ENCODE measurements at regions of chr17 and their contacts with region 1.

Region 1: GRCh38 chr17:74961657-74962490 is 10.7 kb downstream of the HID1 start:
- DNase-seq: peak; percentile 91 to 96
- ATAC-seq: peak; percentile 58 to 80
- H3K4me3 ChIP-seq: no peak overlapping the region
- H3K27ac ChIP-seq: 0 out of 6 replicates have a peak overlapping the region, but pooled peaks of 1 of the 2 experiments have one; percentile 9
- H3K4me1 ChIP-seq: peaks cover 12% of the 10 kb centered on the region
- CTCF ChIP-seq: peak; percentile 95
- EP300 ChIP-seq: no peak
- POLR2A ChIP-seq: no peak
- RAD21 ChIP-seq: peak; percentile 97 to 98

Region 2: DNA sequence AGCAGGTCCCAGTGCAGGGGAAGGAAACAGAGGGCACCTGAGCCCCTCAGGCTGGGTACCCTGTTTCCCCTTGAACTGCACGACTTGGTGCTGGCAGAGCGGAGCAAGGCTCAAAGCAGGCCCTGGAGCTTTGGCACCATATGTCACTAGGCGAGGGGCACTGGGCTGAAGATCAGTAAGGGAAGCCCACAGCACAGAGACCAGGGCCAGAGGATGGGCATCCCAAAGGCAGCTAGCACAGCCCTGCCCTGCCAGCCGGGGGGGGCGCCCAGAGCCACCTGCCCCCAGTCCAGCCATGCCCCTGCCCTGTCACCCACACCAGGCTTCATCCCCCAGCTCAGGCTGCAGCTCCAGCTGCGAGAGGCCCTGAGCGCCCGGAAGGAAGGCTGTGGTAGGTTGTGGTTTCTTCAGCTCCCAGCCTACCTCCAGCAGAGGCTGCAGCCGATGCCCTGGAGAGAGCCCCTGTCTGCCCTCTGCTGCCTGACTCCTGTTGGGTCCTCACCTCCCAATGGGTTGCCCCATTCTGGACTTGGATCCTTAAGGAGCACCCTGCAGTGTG is 202.6 kb before region 1 on chr17:
- CTCF ChIA-PET with region 1: no interaction called
- POLR2A ChIA-PET with region 1: no interaction called
- DNase-seq: no peak
- ATAC-seq: peak; percentile 6 to 38; a peak in 3 of 6 replicates
- H3K4me3 ChIP-seq: no peak overlapping the region
- H3K27ac ChIP-seq: peak overlapping the region; percentile 57 to 79
- H3K4me1 ChIP-seq: peaks cover 69% of the 10 kb centered on the region
- CTCF ChIP-seq: no peak
- EP300 ChIP-seq: no peak
- POLR2A ChIP-seq: no peak
- RAD21 ChIP-seq: no peak

Region 3: GRCh38 chr17:74842599-74843351 is 119.1 kb before region 1 on chr17:
- CTCF ChIA-PET with region 1: interaction called, 18 read pairs
- POLR2A ChIA-PET with region 1: interaction called, 3 read pairs
- DNase-seq: peak; percentile 82 to 96
- ATAC-seq: peak; percentile 79 to 89
- H3K4me3 ChIP-seq: peak overlapping the region; percentile 50
- H3K27ac ChIP-seq: peak overlapping the region; percentile 82 to 89
- H3K4me1 ChIP-seq: peaks cover 4% of the 10 kb centered on the region; the same call in 1 of the 3 replicates
- CTCF ChIP-seq: peak; percentile 63
- EP300 ChIP-seq: no peak
- POLR2A ChIP-seq: peak; percentile 77
- RAD21 ChIP-seq: peak; percentile 41 to 61; a peak in 4 of 5 replicates

Region 4: DNA sequence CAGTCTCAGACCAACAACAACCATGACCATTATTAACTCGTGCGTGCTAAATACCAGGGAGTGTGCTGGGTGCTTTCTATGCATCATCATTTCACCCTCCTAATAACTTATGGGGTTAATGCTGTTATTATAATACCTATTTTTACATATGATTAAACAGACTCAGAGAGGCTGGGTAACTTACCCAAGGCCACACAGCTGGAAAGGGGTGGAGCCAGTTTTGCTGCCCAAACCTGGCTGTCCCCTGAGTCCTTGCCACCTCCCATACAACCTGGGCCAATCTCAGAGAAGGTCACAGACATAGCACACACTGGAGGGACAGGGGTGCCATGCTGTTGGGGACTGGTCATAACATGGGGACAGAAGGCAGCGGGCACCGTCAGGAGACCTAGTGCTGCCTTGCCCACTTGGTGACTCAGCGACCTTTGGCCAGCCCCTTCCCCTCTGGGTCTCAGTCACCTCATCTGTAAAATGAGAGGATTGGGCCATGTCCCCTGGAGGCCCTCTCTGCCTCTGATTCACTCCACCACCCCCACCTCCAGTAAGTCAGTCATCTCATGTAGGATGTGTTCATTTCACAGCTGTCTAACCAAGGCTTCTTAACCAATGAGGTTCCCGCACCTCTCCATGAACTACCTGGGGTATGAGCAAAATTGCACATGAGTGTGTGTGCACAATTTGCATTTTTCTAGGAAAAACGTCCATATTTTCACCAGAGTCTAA is 57.0 kb before region 1 on chr17:
- CTCF ChIA-PET with region 1: interaction called, 11 read pairs
- POLR2A ChIA-PET with region 1: no interaction called
- DNase-seq: no peak
- ATAC-seq: no peak
- H3K4me3 ChIP-seq: no peak overlapping the region
- H3K27ac ChIP-seq: no peak overlapping the region
- H3K4me1 ChIP-seq: no peaks in the 10 kb centered on the region
- CTCF ChIP-seq: no peak
- EP300 ChIP-seq: no peak
- POLR2A ChIP-seq: no peak
- RAD21 ChIP-seq: no peak

Region 5: DNA sequence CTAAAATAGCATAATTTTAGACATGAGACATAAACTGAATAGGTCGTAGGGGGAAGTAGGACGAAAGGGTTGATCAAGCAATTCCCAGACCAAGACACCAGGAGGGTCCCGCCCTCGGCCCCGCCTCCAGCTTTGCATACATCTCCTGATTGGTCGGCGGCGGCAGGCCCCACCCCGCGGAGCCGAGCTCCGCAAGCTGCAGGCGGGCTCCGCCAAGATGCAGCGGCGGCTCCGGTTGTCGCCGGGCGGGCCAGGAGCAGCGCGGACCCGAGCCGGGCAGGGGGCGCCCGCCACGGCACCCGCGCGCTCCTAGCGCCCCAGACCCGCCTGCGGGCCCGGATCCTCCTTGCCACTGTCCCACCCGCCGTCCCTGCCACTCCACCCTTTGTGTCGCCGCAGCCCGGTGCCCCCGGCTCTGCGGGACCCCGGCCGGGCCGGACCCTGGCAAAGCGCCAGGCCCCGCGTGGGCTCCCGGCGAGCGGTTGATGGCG is 25.6 kb after region 1 on chr17 and contains the start of gene CDR2L:
- CTCF ChIA-PET with region 1: interaction called, 181 read pairs
- POLR2A ChIA-PET with region 1: interaction called, 13 read pairs
- DNase-seq: peak; percentile 94
- ATAC-seq: peak; percentile 82 to 87
- H3K4me3 ChIP-seq: peak within 1 kb of the TSS; percentile 80
- H3K27ac ChIP-seq: peak within 1 kb of the TSS; percentile 94 to 95
- H3K4me1 ChIP-seq: peaks cover 53% of the 10 kb centered on the region
- CTCF ChIP-seq: no peak
- EP300 ChIP-seq: no peak
- POLR2A ChIP-seq: peak; percentile 95
- RAD21 ChIP-seq: no peak
- polyA plus RNA-seq, gene CDR2L: 18.0 and 18.5 TPM in 2 replicates

Region 6: DNA sequence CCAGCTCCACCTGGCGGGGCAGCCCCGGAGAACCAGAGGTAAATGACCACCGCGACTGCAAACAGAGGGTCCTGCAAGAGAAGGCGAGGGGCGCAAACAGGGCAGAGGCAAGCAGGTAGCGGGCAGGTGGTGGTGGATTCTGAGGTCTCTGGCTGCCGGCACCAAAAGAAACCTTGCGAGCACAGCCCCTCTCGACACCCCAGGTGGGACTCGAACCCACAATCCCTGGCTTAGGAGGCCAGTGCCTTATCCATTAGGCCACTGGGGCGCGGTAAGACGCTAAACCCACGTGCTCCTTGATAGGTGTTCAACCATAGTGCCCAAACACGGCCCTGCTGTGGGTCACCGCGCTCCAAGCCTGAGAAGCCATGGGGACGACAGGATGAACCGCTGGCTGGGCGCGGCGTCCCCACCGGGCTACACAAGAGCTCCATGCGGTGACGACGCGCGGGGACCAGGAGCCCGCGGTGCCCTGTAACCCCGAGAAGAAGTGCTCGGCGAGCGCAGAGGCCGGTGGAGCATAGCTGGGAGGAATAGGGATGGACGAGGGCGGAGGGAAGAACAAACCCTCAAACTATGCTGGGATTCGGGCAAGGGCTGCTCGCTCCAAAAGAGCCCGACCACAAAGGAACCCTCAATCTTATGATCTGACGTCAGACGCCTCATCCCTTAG is 72.5 kb after region 1 on chr17:
- CTCF ChIA-PET with region 1: interaction called, 60 read pairs
- POLR2A ChIA-PET with region 1: interaction called, 15 read pairs
- DNase-seq: peak; percentile 81 to 97
- ATAC-seq: peak; percentile 57 to 71
- H3K4me3 ChIP-seq: peak overlapping the region; percentile 73
- H3K27ac ChIP-seq: peak overlapping the region; percentile 97
- H3K4me1 ChIP-seq: peaks cover 30% of the 10 kb centered on the region
- CTCF ChIP-seq: no peak
- EP300 ChIP-seq: no peak
- POLR2A ChIP-seq: no peak
- RAD21 ChIP-seq: no peak; a peak in 1 of 5 replicates

Region 7: GRCh38 chr17:75131280-75132017 is 169.6 kb after region 1 on chr17 and contains the start of gene NT5C:
- CTCF ChIA-PET with region 1: interaction called, 23 read pairs
- POLR2A ChIA-PET with region 1: no interaction called
- DNase-seq: peak; percentile 85 to 91
- ATAC-seq: peak; percentile 83 to 86
- H3K4me3 ChIP-seq: peak within 1 kb of the TSS; percentile 89
- H3K27ac ChIP-seq: peak within 1 kb of the TSS; percentile 97
- H3K4me1 ChIP-seq: peaks cover 40% of the 10 kb centered on the region
- CTCF ChIP-seq: peak; percentile 95
- EP300 ChIP-seq: no peak
- POLR2A ChIP-seq: peak; percentile 72
- RAD21 ChIP-seq: peak; percentile 58 to 77
- polyA plus RNA-seq, gene NT5C: 54.5 and 73.7 TPM in 2 replicates

Region 8: GRCh38 chr17:75430159-75430974 is 468.5 kb after region 1 on chr17:
- CTCF ChIA-PET with region 1: no interaction called
- POLR2A ChIA-PET with region 1: no interaction called
- DNase-seq: peak; percentile 90 to 91
- ATAC-seq: peak; percentile 66 to 84; a peak in 5 of 6 replicates
- H3K4me3 ChIP-seq: peak overlapping the region; percentile 17; the same call in 2 of the 3 replicates
- H3K27ac ChIP-seq: peak overlapping the region; percentile 80 to 89
- H3K4me1 ChIP-seq: peaks cover 35% of the 10 kb centered on the region
- CTCF ChIP-seq: no peak
- EP300 ChIP-seq: no peak
- POLR2A ChIP-seq: 0 out of 2 replicates have a peak, but pooled peaks have one; percentile 15
- RAD21 ChIP-seq: no peak